ENCODE measurements at regions of chr18 and their contacts with region 1.

Region 1: DNA sequence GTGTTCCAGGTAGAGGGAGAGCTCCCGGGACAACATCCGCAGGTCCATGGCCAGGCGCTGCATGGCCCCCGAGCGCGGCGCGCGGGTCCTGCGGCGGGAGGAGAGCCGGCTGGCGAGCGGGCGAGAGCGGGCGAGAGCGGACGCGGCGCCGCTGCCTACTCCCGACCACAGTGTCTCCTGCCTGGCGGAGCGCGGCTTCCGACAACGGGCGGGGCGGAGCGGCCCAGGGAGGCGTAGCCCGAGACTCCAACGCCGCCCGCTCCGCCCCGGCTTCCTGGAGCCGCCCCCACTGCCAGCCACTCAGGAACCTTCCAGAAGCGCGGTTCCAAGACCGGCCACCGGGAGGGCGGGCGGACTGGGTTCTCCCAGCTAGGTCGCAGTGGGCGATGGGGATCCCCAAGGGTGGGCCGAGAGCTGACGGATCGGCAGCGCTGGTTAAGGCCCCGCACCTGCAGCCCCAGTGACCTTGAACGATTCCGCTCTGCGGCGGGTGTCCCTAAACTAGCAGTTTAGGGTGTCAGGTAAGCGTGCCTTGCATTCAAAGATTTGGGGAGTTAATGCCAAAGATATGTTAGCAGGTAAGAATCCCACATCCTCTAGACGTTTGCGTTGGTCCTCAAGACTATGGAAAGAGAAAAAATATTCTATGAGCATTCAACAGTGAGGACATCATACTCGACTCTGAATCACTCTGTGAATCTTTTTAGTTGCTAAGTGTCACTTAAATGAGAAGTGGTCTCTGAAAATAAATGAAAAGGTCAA is at the start of gene ABHD3:
- DNase-seq: peak; percentile 85
- ATAC-seq: peak; percentile 100
- H3K4me3 ChIP-seq: peak within 1 kb of the TSS; percentile 99
- H3K27ac ChIP-seq: peak within 1 kb of the TSS; percentile 79
- H3K4me1 ChIP-seq: no peaks in the 10 kb centered on the region; the same call in 1 of the 2 replicates
- H3K27me3 ChIP-seq: no peaks in the 10 kb centered on the region
- CTCF ChIP-seq: peak; percentile 28; the same call in 1 of the 2 replicates
- POLR2A ChIP-seq: peak; percentile 78
- RAD21 ChIP-seq: no peak
- total RNA-seq, gene ABHD3: 3.3 and 4.5 TPM in 2 replicates

Region 2: DNA sequence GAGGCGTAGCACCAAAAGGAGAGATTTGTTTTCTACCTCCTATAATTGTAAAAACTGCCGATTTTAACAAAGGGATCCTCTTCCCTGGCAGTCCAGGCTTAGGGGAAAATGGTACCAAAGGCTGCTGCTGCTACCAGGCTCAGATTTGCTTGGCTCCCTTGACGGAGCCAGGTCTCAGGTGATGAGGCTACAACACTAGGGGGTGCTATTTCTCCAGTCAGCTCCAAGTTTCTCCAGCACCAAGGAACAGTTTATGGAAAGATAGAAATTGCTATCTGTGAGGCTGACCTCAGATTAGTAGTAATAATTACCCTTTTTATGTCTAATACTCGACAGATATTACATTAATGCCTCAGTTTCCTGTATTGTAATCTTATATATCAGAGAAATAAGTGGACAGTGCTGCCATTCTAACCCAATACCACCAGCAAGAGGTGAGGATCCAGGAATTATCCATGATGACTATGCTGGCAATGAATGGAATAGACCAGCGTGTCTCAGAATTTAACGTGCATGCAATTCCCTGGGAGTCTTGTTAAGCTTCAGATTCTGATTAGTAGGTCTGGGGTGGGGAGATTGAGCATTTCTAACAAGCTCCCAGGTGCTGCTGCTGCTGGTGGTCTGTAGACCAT is 215.5 kb before region 1 on chr18:
- CTCF ChIA-PET with region 1: no interaction called
- POLR2A ChIA-PET with region 1: no interaction called
- dilution Hi-C with region 1: no loop called
- in situ Hi-C with region 1: no loop called
- intact Hi-C with region 1: loop called (anchors 5 kb)
- DNase-seq: peak; percentile 66
- ATAC-seq: peak; percentile 77
- H3K4me3 ChIP-seq: no peak overlapping the region
- H3K27ac ChIP-seq: no peak overlapping the region
- H3K4me1 ChIP-seq: 0 out of 2 replicates have a peak, but pooled peaks cover 2% of the 10 kb centered on the region
- H3K27me3 ChIP-seq: no peaks in the 10 kb centered on the region
- CTCF ChIP-seq: peak; percentile 76
- POLR2A ChIP-seq: no peak
- RAD21 ChIP-seq: peak; percentile 71

Region 3: DNA sequence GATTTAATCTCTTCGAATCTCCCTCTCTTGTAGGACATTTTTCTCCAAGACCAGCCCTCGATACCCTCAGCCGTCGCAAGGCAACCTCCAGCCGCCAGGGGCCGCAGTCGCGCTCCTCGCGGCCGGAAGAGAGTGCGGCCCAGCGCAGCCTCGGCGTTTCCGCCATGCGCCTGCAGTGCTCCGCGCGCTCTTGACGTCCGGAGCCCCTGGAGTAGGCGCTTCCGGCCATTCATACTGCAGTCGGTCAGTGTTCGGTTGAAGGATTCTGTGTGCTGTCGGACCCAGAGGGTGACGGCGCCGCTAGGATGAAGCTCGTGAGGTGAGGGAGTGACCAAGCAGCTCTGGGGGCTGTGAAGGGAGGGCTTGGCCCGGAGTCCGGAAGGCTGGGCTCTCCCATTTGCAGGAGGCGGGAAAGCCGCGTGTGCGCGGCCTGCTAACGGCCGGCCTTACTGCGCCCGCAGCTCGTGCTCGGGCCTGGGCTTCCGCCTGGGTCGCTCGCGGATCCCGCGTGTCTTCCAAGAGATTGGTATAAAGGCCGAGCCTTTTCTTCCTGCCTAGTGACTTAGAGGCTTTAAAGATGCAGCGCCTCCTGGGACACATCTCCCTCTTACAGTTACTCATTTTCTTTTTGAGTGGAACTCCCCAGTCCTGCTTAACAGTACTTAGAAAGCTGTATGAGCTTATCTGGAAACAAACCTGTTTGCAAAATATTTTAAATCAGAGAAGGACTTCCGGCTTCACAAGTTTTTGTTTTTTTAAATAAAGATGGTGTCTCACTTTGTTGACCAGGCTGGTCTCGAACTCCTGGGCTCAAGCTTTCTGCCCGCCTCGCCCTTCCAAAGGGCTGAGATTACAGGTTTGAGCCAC is 92.4 kb before region 1 on chr18 and contains the start of gene SNRPD1:
- CTCF ChIA-PET with region 1: no interaction called
- POLR2A ChIA-PET with region 1: no interaction called
- dilution Hi-C with region 1: no loop called
- in situ Hi-C with region 1: no loop called
- intact Hi-C with region 1: loop called (anchors 1 kb)
- DNase-seq: peak; percentile 90
- ATAC-seq: peak; percentile 100
- H3K4me3 ChIP-seq: peak within 1 kb of the TSS; percentile 85
- H3K27ac ChIP-seq: peak within 1 kb of the TSS; percentile 95
- H3K4me1 ChIP-seq: peaks cover 2% of the 10 kb centered on the region; the same call in 1 of the 2 replicates
- H3K27me3 ChIP-seq: no peaks in the 10 kb centered on the region
- CTCF ChIP-seq: peak; percentile 96
- POLR2A ChIP-seq: peak; percentile 92
- RAD21 ChIP-seq: peak; percentile 27; the same call in 1 of the 2 replicates
- total RNA-seq, gene SNRPD1: 6.8 and 24.7 TPM in 2 replicates

Region 4: DNA sequence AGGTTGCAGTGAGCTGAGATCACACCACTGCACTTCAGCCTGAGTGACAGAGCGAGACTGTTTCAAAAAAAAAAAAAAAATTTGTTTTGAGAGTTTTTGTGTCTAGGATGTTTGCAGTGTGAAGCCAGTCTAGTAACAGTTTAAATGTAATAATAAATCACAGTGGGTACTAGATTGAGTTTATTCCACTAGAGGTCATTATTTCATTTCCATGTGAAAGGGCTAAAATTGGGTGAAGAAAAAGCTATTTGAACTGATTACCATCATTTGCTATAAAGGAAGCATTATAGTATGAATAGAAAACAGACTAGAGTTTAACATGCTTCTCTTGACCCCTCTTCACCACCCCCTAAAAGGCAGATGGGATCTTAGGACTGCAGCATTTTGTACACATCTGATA is 72.4 kb before region 1 on chr18:
- CTCF ChIA-PET with region 1: no interaction called
- POLR2A ChIA-PET with region 1: no interaction called
- dilution Hi-C with region 1: no loop called
- in situ Hi-C with region 1: no loop called
- intact Hi-C with region 1: loop called (anchors 5 kb)
- DNase-seq: no peak
- ATAC-seq: no peak; the same call in 1 of the 2 replicates
- H3K4me3 ChIP-seq: no peak overlapping the region
- H3K27ac ChIP-seq: no peak overlapping the region
- H3K4me1 ChIP-seq: no peaks in the 10 kb centered on the region
- H3K27me3 ChIP-seq: no peaks in the 10 kb centered on the region
- CTCF ChIP-seq: no peak
- POLR2A ChIP-seq: no peak
- RAD21 ChIP-seq: no peak

Region 5: DNA sequence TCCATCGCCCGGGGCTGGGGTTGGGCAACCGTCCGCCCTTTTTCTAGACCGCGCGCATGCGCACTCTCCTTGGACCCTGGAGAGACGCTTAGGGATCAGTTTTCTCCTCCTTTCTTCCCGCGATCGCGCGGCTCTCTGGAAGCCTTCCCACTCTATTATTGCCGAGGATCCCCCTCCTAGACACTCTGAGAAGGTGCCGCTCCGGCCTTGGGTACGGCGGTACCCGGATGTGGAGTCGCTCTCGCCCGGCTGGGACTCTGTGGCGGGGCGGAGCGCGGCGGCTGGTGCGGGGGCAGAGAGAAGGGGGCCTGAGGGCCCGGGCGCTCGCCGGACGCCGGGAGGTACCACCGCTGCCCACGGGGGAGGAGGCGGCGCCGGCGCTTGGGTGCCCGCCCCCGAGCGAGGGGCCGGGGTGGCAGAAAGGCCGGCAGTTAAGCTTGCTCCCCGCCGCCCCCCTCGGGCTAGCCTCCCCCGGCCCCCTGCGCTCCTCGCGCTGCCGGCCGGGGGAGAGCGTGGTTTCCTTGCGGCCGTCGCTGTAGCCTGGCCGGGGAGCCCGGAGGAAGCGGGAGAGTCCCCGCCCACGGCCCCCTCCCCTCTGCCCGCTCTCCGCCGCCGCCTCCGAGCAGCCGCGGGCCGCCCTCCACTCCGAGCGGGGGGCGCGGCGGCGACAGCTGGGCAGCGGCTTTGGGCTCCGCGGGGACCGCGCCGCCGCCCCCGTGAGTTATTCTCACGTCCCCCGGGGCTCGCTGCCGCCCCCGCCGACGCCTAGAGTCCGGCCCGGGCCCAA is 36.1 kb after region 1 on chr18 and contains the start of gene MIB1:
- CTCF ChIA-PET with region 1: no interaction called
- POLR2A ChIA-PET with region 1: no interaction called
- dilution Hi-C with region 1: no loop called
- in situ Hi-C with region 1: no loop called
- intact Hi-C with region 1: loop called (anchors 1 kb)
- DNase-seq: peak; percentile 41
- ATAC-seq: peak; percentile 80
- H3K4me3 ChIP-seq: peak within 1 kb of the TSS; percentile 78
- H3K27ac ChIP-seq: peak within 1 kb of the TSS; percentile 97
- H3K4me1 ChIP-seq: no peaks in the 10 kb centered on the region; the same call in 1 of the 2 replicates
- H3K27me3 ChIP-seq: no peaks in the 10 kb centered on the region
- CTCF ChIP-seq: no peak
- POLR2A ChIP-seq: peak; percentile 71
- RAD21 ChIP-seq: no peak
- total RNA-seq, gene MIB1: 80.1 and 83.6 TPM in 2 replicates

Region 6: DNA sequence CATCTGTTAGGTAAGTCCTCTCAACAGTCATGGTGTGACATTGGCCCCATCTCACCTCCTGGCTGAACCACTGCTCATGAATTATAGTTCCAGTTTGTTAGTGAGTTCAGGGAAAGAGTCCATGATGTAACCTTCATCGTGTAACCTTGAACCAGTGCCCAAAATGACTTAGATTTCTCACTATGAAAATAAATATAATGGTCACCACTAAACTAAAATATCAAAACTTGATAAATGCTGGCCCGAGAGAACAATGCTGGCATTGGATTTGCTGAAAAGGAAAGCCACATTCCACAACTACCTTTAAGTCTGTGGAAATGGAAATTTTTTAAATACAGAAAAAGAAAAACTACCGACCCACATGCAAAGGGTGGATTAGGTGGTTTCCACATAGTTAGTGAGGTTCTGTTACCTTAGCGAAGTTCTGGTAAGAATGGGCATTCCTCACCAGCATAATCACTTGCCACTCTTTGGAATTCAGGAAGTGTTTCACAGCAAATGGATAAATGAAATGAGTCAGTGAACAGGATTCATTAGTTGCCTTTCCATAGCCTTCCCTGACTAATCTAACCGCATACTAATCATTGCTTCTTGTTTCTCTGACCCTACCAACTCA is 846.9 kb after region 1 on chr18:
- CTCF ChIA-PET with region 1: no interaction called
- POLR2A ChIA-PET with region 1: no interaction called
- dilution Hi-C with region 1: no loop called
- in situ Hi-C with region 1: no loop called
- intact Hi-C with region 1: no loop called
- DNase-seq: peak; percentile 92
- ATAC-seq: peak; percentile 62
- H3K4me3 ChIP-seq: no peak overlapping the region
- H3K27ac ChIP-seq: no peak overlapping the region
- H3K4me1 ChIP-seq: peaks cover 22% of the 10 kb centered on the region
- H3K27me3 ChIP-seq: no peaks in the 10 kb centered on the region; the same call in 1 of the 2 replicates
- CTCF ChIP-seq: no peak
- POLR2A ChIP-seq: 0 out of 2 replicates have a peak, but pooled peaks have one; percentile 24
- RAD21 ChIP-seq: 0 out of 2 replicates have a peak, but pooled peaks have one; percentile 18